ACHN (cell line): ENCODE measurements at regions of chr15 and their contacts with region 1.

Region 1: DNA sequence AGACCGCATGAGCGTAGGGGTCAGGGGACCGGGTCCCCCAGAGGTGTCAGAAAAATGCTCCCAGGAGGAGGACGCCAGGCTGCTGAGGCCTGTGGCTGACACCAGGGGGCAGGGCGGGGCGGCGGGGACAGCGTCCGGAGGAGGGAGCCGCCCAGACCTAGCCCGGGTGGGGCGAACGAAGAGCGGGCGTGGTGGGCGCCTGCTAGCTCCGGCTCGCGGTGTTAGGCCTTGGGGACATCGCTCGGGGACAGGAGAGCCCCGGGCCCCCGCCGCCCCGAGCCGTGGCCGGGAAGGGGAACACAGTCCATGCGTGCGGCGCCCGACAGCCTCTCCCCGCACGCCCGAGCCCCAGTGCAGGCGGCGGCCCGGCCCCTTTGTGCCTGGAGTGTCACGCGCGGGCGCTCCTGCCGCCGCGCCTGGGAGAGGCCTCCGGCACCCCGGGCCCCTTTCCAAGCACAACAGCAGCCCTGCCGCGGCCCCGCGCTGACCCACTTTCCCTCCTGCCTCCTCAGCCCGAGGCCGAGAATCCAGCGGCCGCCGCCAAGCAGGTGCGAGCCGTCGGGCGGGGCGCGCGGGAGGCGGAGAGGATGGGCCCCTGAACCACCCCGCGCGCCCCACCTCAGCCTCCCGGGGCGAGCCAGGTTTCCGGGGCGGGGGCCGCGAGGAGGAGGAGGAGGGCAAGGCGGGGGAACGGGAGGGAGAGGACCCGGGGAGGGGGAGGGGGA is 111.0 kb upstream of the KLF13 start:
- DNase-seq: peak; percentile 55

Region 2: GRCh38 chr15:31069360-31070000 is 146.2 kb before region 1 on chr15:
- in situ Hi-C with region 1: no loop called
- DNase-seq: no peak

Region 3: GRCh38 chr15:31302778-31303725 is 87.4 kb after region 1 on chr15:
- in situ Hi-C with region 1: loop called (anchors 25 kb)
- DNase-seq: no peak